GM13977 (cell line): ENCODE measurements at regions of chr21 and their contacts with region 1.

Region 1: GRCh38 chr21:42424914-42425541 is 21.3 kb downstream of the UBASH3A start:
- DNase-seq: no peak
- CTCF ChIP-seq: no peak

Region 2: GRCh38 chr21:42374864-42375492 is 50.0 kb before region 1 on chr21:
- in situ Hi-C with region 1: loop called (anchors 5 kb)
- DNase-seq: no peak
- CTCF ChIP-seq: no peak

Region 3: DNA sequence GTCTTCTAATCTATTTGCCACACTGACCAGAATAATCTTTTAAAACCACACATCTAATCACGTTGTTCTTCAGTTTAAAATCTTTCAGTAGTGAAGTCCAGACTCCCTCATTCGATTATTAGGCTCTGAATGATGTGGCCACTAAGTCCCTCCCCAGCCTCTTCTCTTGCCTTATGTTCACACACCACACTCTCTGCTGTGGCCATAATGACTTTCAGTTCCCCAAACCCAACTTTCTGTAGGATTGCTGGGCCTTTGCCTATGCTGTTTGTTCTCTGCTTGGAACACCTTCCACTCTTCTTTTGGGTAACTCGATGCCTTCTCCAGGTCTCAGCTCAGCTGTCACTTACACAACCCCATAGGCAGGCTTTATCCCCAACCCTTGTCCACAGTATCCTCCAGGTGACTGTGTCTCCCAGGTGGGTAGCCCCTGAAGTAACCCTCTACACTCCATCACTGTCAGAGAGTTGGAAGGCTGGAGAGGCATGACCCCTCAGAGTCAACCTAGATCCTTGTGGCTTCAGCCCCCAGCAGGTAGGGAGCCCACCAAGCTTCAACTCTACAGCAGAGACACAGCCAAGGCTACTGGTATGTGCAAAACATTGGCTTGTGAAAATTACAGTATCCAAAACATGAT is 80.2 kb after region 1 on chr21:
- in situ Hi-C with region 1: no loop called
- DNase-seq: peak; percentile 77
- CTCF ChIP-seq: no peak